ENCODE measurements at regions of chr12 and their contacts with region 1.

Region 1: DNA sequence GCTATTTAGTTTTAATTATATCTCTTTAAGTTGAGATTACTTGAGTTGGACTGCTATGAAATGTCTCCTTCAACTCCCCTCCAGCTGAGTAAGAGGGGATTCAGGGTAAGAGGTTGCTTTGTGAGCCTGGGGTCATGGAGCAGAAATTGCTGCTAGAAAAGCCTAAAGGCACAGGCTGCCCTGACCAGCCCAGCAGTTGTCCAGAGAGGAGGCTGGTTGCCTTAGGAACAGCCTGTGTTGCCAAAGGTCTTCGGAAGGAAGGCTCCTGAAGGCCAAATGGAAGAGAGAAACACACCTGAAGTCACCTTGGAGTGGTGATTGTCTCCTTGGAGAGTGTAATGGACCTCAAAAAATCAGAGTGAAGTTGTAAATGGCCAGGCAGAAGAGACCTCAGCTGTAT is 235.5 kb upstream of the PDE3A start:
- DNase-seq: no peak
- H3K4me3 ChIP-seq: no peak overlapping the region
- H3K27ac ChIP-seq: no peak overlapping the region
- H3K4me1 ChIP-seq: no peaks in the 10 kb centered on the region
- CTCF ChIP-seq: no peak

Region 2: DNA sequence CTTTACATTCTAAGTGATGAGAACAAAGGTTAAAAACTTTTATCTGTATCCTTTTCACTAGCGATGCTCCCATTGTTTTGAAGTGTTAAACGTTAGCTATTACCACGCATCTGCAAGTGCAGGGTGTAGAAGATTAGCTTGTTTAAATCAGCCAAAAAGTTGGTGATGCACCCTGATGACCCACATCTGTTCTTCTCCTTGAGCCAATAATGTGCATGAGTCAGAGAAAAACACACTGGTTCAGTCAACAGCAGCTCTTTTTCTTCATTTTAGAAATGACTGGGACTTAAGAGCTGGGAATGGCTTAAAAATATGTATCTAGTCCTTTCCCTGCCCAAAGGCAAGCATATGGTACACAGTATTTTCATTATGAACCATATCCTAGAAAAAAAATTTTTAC is 88.0 kb before region 1 on chr12:
- CTCF ChIA-PET with region 1: no interaction called
- POLR2A ChIA-PET with region 1: no interaction called
- intact Hi-C with region 1: no loop called
- DNase-seq: no peak
- H3K4me3 ChIP-seq: no peak overlapping the region
- H3K27ac ChIP-seq: no peak overlapping the region
- H3K4me1 ChIP-seq: no peaks in the 10 kb centered on the region
- CTCF ChIP-seq: no peak

Region 3: GRCh38 chr12:20212658-20213555 is 80.1 kb after region 1 on chr12:
- CTCF ChIA-PET with region 1: no interaction called
- POLR2A ChIA-PET with region 1: no interaction called
- intact Hi-C with region 1: loop called (anchors 5 kb)
- DNase-seq: no peak
- H3K4me3 ChIP-seq: no peak overlapping the region
- H3K27ac ChIP-seq: no peak overlapping the region
- H3K4me1 ChIP-seq: no peaks in the 10 kb centered on the region
- CTCF ChIP-seq: no peak

Region 4: GRCh38 chr12:20234473-20234872 is 101.7 kb after region 1 on chr12:
- CTCF ChIA-PET with region 1: no interaction called
- POLR2A ChIA-PET with region 1: no interaction called
- intact Hi-C with region 1: no loop called
- DNase-seq: no peak
- H3K4me3 ChIP-seq: no peak overlapping the region
- H3K27ac ChIP-seq: no peak overlapping the region
- H3K4me1 ChIP-seq: no peaks in the 10 kb centered on the region
- CTCF ChIP-seq: no peak

Measured in OCI-LY7 (cell line).